ENCODE measurements at regions of chr16 and their contacts with region 1.

Region 1: DNA sequence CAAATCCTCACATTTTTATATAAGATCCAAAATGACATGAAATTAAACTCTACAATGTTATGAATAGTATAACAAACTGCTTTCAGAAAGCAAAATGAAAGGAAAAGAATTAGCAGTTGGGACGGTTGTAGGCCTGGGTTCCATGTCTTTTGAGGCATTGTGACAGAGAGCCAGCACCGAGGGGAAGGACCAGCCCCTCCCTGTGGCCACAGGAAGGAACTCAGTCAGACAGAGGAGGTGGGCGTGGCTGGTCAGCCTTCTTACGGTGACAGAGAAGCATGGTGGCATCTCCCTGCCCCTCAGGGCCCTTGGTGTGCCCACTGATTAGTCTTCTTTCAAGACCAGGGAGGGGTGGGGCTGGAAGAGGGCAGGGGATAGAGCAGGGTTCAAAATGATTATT is 5.7 kb downstream of the ZNF319 start:
- DNase-seq: peak in 1 of 10 donors; percentile 56
- H3K4me3 ChIP-seq: no peak overlapping the region
- H3K27ac ChIP-seq: peak overlapping the region in 3 of 59 donors; percentile 7 to 36 (median 15)
- H3K27me3 ChIP-seq: no peaks in the 10 kb centered on the region
- CTCF ChIP-seq: peak in 25 of 56 donors; percentile 8 to 37 (median 23)

Region 2: DNA sequence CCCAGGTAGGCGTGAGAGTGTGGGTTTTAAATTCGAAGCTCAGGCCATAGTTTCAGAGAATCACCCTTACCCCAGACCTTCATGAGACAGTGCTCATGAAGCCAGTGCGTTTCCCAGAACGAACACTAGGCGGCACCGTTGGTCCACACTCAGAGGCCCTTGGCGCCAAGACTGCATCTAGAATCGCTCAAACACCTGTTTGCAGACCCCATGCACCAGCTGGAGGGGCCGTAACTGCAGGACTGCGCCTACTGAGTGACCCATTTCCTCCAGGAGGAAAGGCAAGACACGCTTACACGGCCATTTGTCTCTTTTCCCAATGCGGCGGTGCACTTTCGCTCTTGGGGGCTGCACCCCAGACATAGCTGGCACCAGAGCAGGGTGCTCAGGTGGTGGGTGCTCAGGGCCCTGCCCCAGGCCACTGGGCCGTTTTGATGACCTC is 418.3 kb before region 1 on chr16:
- intact Hi-C with region 1: loop called in 1 of 2 experiments (anchors 10 kb)
- DNase-seq: peak; percentile 67 to 90 (median 79)
- H3K4me3 ChIP-seq: peak overlapping the region in 6 of 59 donors; percentile 6 to 46 (median 23)
- H3K27ac ChIP-seq: no peak overlapping the region
- H3K27me3 ChIP-seq: peaks cover 0 to 8% (median 0%) of the 10 kb centered on the region in 45 donors
- CTCF ChIP-seq: peak; percentile 62 to 97 (median 92)